ENCODE measurements at regions of chr7 and their contacts with region 1.

Region 1: GRCh38 chr7:66810716-66811115 is 70.2 kb downstream of the RABGEF1 start:
- DNase-seq: no peak
- H3K4me3 ChIP-seq: no peak overlapping the region
- H3K27ac ChIP-seq: no peak overlapping the region
- H3K4me1 ChIP-seq: no peaks in the 10 kb centered on the region
- H3K27me3 ChIP-seq: no peaks in the 10 kb centered on the region
- CTCF ChIP-seq: no peak
- POLR2A ChIP-seq: no peak

Region 2: DNA sequence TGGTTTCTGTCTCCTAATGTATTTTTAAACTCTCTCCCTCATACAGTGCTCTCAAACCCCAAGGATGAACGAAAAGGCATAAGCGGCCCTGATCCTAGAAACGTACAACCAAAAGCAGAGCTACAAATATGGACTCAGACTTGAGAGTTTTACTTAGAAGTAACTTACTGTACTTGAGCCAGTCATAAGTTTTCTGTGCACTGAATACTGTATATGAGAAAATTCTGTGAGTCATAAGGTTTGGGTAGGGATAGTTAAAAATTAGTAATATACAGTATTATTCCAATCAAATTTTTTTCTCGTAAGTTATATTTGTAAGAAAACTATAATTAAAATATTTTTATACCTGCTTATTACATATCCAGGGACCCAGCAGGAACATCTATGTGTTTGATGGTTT is 741.0 kb before region 1 on chr7:
- intact Hi-C with region 1: loop called (anchors 5 kb)
- DNase-seq: no peak
- H3K4me3 ChIP-seq: no peak overlapping the region
- H3K27ac ChIP-seq: no peak overlapping the region
- H3K4me1 ChIP-seq: no peaks in the 10 kb centered on the region
- H3K27me3 ChIP-seq: no peaks in the 10 kb centered on the region
- CTCF ChIP-seq: no peak
- POLR2A ChIP-seq: no peak